CD4-positive, alpha-beta memory T cell (primary cell): ENCODE measurements at regions of chr13 and their contacts with region 1.

Region 1: DNA sequence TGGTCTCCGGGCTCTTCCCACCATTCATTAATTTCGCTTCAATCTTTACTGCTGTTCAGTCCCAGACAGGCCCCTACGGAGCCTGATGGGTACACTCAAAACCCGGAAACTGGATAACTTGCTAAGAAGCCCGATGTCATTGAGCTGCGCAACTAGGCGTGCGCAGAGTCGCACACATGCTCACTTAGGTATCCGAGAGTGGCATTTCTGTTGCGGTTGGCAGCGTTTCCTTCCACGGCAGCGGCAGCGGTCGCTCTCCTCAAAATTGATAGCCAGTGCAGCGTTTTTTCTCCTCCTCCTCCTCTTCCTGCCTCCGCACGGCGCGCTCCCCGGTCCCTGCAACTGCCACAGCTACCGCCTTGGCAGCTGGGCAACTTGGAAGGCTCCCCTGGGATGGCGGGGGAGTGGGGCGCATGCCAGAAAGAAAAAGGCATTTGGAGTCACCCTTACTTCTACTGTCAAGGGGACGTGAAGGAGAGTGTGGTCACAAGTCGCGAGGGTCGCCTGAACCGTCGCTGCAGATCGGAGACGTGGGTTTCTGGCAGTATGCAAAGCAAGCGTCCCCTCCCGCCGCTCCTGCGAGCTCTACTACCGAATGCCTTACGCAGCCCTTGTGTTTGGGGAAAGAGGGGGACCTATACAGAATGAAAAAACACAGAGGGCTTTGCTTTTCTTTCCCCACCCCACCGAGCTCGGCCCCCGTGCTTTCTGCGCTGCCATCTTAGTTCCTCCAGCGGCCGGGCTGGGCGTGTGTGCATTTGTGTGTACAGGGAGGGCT is 2.4 kb upstream of the MYCBP2 start:
- DNase-seq: peak; percentile 89 to 95 (median 93)
- H3K4me3 ChIP-seq: peak overlapping the region; percentile 73 to 78
- H3K4me3 Mint-ChIP-seq: peak overlapping the region; percentile 89 to 100 (median 96)
- H3K27ac ChIP-seq: peak overlapping the region; percentile 62
- H3K27ac Mint-ChIP-seq: peak overlapping the region; percentile 84 to 99 (median 93)
- H3K4me1 ChIP-seq: peaks cover 40% of the 10 kb centered on the region
- H3K4me1 Mint-ChIP-seq: peaks cover 19 to 57% (median 37%) of the 10 kb centered on the region in 4 donors
- H3K27me3 ChIP-seq: no peaks in the 10 kb centered on the region
- H3K27me3 Mint-ChIP-seq: no peaks in the 10 kb centered on the region

Region 2: DNA sequence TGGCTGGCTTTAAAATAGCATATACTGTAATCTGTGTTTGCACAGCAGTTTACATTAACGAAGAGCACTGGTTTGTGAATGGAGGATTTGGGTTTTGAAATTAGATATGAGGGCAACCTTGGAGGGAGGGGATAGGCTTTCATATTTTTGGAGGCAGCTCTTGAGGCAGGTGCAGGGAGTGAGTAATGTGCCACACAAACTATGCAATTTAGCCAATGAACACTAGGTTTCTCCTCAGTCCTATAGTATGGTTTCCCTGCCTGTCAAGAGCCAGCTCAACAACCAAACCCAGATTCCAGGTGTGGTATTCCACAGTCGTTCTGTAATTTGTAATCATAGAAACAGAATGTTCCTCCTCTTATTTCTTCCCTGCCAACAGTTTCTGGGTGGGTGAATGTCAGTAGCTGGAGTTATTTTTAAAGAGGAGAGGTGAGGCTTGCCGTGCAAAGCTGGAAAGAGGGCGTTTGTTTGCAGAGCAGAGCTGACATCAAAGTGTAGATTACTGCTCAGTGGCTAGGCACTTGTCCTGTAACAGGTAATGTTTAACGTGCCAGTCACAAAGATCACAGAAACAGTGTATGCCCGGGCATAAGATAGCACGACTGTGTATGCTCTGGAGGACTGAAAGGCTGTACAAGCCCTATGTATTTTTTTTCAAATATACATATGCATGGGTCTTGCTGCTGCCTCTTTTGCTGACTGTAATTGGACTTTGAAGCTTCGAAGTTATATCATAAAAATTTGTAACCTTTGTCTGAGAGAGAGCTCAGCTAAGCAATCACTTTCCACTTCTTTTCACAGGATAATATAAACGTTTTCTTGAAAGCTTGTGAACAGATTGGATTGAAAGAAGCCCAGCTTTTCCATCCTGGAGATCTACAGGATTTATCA is 1568.9 kb before region 1 on chr13:
- CTCF ChIA-PET with region 1: no interaction called
- POLR2A ChIA-PET with region 1: no interaction called
- intact Hi-C with region 1: loop called (anchors 10 kb)
- DNase-seq: peak in 4 of 5 donors; percentile 24 to 29 (median 26)
- H3K4me3 ChIP-seq: peak overlapping the region in 1 of 2 donors; percentile 20
- H3K4me3 Mint-ChIP-seq: peak overlapping the region; percentile 77 to 91 (median 84)
- H3K27ac ChIP-seq: no peak overlapping the region
- H3K27ac Mint-ChIP-seq: peak overlapping the region; percentile 62 to 87 (median 77)
- H3K4me1 ChIP-seq: peaks cover 64% of the 10 kb centered on the region
- H3K4me1 Mint-ChIP-seq: peaks cover 54 to 80% (median 66%) of the 10 kb centered on the region in 4 donors
- H3K27me3 ChIP-seq: no peaks in the 10 kb centered on the region
- H3K27me3 Mint-ChIP-seq: no peaks in the 10 kb centered on the region

Region 3: DNA sequence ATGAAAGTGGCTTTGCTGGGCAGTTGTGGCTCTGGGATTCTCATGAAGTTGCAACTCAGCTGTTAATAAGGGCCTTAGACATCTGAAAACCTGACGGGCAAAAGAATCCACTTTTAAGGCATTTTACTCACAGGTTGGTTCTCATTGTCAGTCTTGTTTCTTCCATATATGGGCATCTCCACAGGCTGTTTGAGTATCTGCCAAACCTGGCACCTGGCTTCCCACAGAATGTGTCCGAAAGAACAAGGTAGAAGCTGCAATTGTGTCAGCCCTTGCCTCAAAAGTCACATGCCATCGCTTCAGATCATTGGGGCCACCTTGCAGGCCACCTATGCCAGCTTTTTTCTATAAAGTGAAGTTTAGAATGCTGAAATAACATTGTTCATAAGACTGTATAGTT is 545.5 kb before region 1 on chr13:
- CTCF ChIA-PET with region 1: no interaction called
- POLR2A ChIA-PET with region 1: no interaction called
- intact Hi-C with region 1: no loop called
- DNase-seq: no peak
- H3K4me3 ChIP-seq: no peak overlapping the region
- H3K4me3 Mint-ChIP-seq: no peak overlapping the region
- H3K27ac ChIP-seq: no peak overlapping the region
- H3K27ac Mint-ChIP-seq: no peak overlapping the region
- H3K4me1 ChIP-seq: no peaks in the 10 kb centered on the region
- H3K4me1 Mint-ChIP-seq: no peaks in the 10 kb centered on the region
- H3K27me3 ChIP-seq: no peaks in the 10 kb centered on the region
- H3K27me3 Mint-ChIP-seq: peaks cover 6 to 7% of the 10 kb centered on the region in 2 donors

Region 4: GRCh38 chr13:77026818-77027585 is 302.3 kb before region 1 on chr13 and contains the start of gene FBXL3:
- CTCF ChIA-PET with region 1: no interaction called
- POLR2A ChIA-PET with region 1: interaction called, 65 read pairs
- intact Hi-C with region 1: loop called (anchors 1 kb)
- DNase-seq: peak; percentile 83 to 87 (median 87)
- H3K4me3 ChIP-seq: peak within 1 kb of the TSS; percentile 66 to 86
- H3K4me3 Mint-ChIP-seq: peak within 1 kb of the TSS; percentile 96 to 100 (median 99)
- H3K27ac ChIP-seq: peak within 1 kb of the TSS; percentile 94
- H3K27ac Mint-ChIP-seq: peak within 1 kb of the TSS; percentile 80 to 99 (median 97)
- H3K4me1 ChIP-seq: peaks cover 48% of the 10 kb centered on the region
- H3K4me1 Mint-ChIP-seq: peaks cover 29 to 62% (median 46%) of the 10 kb centered on the region in 4 donors
- H3K27me3 ChIP-seq: no peaks in the 10 kb centered on the region
- H3K27me3 Mint-ChIP-seq: no peaks in the 10 kb centered on the region
- total RNA-seq, gene FBXL3: 94.2 to 96.2 TPM

Region 5: DNA sequence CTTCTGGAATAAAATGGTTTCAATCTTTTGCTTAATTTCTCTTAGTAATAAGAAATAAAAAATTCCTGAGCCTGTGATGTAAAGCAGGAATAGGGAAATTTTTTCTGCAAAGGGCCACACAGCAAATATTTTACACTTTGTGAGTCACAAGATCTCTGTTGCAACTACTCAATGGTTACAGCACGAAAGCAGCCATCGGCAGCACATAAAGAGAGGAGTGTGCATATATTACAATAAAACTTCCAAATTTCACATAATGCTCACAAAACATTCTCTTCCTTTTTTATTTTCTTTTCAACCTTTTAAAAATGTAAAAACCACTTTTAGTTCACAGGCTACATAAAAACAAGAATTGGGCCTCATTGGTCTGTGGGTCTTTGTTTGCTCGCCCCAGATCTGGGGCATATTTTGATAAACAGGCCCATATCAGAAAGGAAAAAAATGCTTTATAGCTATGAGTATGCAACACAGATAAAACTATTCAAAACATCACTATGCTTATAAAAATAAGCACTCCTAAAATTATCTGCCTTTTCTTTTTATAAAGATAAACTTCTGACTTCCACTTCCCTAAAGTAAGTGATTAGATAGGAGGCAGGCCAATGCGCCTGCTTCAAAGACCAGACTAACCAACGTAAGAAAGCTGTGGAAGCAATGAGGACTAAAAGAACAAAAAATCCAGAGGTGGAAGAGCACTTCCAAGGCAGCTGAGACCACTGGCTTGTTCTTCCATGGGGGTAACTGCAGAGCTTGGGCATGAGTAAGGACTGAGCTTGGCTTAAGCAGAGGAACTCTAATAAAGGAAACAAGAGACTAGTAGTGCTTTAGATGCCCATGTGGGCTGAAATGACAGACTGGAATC is 28.9 kb before region 1 on chr13:
- CTCF ChIA-PET with region 1: interaction called, 3 read pairs
- POLR2A ChIA-PET with region 1: interaction called, 11 read pairs
- intact Hi-C with region 1: no loop called
- DNase-seq: no peak
- H3K4me3 ChIP-seq: no peak overlapping the region
- H3K4me3 Mint-ChIP-seq: peak overlapping the region in 4 of 8 donors; percentile 9 to 55 (median 34)
- H3K27ac ChIP-seq: no peak overlapping the region
- H3K27ac Mint-ChIP-seq: peak overlapping the region in 1 of 7 donors; percentile 58
- H3K4me1 ChIP-seq: peaks cover 60% of the 10 kb centered on the region
- H3K4me1 Mint-ChIP-seq: peaks cover 52 to 79% (median 59%) of the 10 kb centered on the region in 4 donors
- H3K27me3 ChIP-seq: no peaks in the 10 kb centered on the region
- H3K27me3 Mint-ChIP-seq: no peaks in the 10 kb centered on the region

Region 6: GRCh38 chr13:77345150-77345780 is 15.9 kb after region 1 on chr13:
- CTCF ChIA-PET with region 1: interaction called, 12 read pairs
- POLR2A ChIA-PET with region 1: interaction called, 24 read pairs
- intact Hi-C with region 1: loop called (anchors 1 kb)
- DNase-seq: peak; percentile 23 to 61 (median 48)
- H3K4me3 ChIP-seq: no peak overlapping the region
- H3K4me3 Mint-ChIP-seq: peak overlapping the region; percentile 52 to 79 (median 74)
- H3K27ac ChIP-seq: peak overlapping the region; percentile 30
- H3K27ac Mint-ChIP-seq: peak overlapping the region; percentile 39 to 93 (median 86)
- H3K4me1 ChIP-seq: peaks cover 17% of the 10 kb centered on the region
- H3K4me1 Mint-ChIP-seq: peaks cover 9 to 21% (median 15%) of the 10 kb centered on the region in 4 donors
- H3K27me3 ChIP-seq: no peaks in the 10 kb centered on the region
- H3K27me3 Mint-ChIP-seq: no peaks in the 10 kb centered on the region

Region 7: GRCh38 chr13:77697217-77698103 is 368.1 kb after region 1 on chr13 and contains the start of gene SLAIN1:
- CTCF ChIA-PET with region 1: no interaction called
- POLR2A ChIA-PET with region 1: interaction called, 25 read pairs
- intact Hi-C with region 1: loop called (anchors 1 kb)
- DNase-seq: peak; percentile 84 to 91 (median 86)
- H3K4me3 ChIP-seq: peak within 1 kb of the TSS; percentile 84 to 90
- H3K4me3 Mint-ChIP-seq: peak within 1 kb of the TSS; percentile 97 to 100 (median 99)
- H3K27ac ChIP-seq: peak within 1 kb of the TSS; percentile 82
- H3K27ac Mint-ChIP-seq: peak within 1 kb of the TSS; percentile 85 to 97 (median 94)
- H3K4me1 ChIP-seq: peaks cover 38% of the 10 kb centered on the region
- H3K4me1 Mint-ChIP-seq: peaks cover 31 to 55% (median 41%) of the 10 kb centered on the region in 4 donors
- H3K27me3 ChIP-seq: no peaks in the 10 kb centered on the region
- H3K27me3 Mint-ChIP-seq: no peaks in the 10 kb centered on the region
- total RNA-seq, gene SLAIN1: 55.1 to 58.9 TPM